A673 (cell line): ENCODE measurements at regions of chr11 and their contacts with region 1.

Region 1: DNA sequence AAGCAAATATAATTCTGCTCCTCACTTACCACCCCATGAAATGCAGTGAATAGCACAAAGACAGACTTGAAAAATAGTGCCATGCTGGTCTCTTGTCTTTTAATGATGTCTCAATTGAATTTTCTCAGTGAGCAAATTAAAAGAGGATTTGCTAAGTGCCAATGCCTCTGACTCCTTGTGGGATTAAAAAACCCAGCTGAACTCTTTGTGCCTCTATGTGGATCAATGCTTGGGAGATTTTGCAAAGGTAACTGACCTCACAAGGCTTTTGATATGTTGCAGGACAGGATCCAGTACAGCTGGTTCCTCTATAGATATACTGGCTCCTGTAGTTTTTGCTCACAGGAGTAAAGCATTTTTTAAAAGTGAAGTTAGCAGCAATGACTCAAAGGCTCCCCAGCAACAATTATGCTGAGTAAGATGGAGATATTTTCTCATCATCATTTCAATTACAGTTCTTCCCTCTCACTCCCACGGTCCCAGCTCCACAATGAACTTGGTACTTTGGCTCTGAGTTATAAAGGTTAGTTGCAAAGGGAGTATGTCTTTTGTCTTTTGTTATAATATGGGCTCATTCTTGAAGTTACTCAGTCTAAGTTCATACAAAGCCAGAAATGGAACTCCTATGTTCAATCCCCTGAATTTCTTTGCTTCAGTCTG is 471.5 kb downstream of the LRRC4C start:
- DNase-seq: no peak
- H3K4me3 ChIP-seq: no peak overlapping the region
- H3K27ac ChIP-seq: no peak overlapping the region
- H3K4me1 ChIP-seq: no peaks in the 10 kb centered on the region
- H3K27me3 ChIP-seq: no peaks in the 10 kb centered on the region
- CTCF ChIP-seq: no peak

Region 2: GRCh38 chr11:40938002-40938401 is 49.9 kb before region 1 on chr11:
- CTCF ChIA-PET with region 1: no interaction called
- POLR2A ChIA-PET with region 1: no interaction called
- intact Hi-C with region 1: loop called (anchors 5 kb)
- DNase-seq: no peak
- H3K4me3 ChIP-seq: no peak overlapping the region
- H3K27ac ChIP-seq: no peak overlapping the region
- H3K4me1 ChIP-seq: no peaks in the 10 kb centered on the region
- H3K27me3 ChIP-seq: no peaks in the 10 kb centered on the region
- CTCF ChIP-seq: no peak

Region 3: DNA sequence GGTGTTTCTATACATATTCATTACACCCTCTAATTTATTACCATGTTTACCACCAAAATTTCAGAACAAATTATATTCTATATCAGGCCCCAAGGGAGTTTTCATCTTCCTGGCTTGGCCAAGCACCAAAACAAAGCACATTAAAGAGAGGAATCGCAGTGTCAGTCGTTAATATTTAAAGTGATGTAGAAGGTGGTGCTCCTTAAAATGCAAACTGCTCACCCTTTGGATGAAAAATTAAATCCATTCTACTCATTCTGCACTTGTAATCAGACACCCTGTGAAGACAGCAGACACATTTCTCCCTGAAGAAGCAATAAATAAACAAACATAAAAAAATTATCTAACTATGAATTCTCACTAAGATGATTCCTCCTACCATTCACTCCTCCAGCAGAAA is 358.1 kb after region 1 on chr11:
- CTCF ChIA-PET with region 1: no interaction called
- POLR2A ChIA-PET with region 1: no interaction called
- intact Hi-C with region 1: no loop called
- DNase-seq: no peak
- H3K4me3 ChIP-seq: no peak overlapping the region
- H3K27ac ChIP-seq: no peak overlapping the region
- H3K4me1 ChIP-seq: no peaks in the 10 kb centered on the region
- H3K27me3 ChIP-seq: no peaks in the 10 kb centered on the region
- CTCF ChIP-seq: no peak